ENCODE measurements at regions of chr7 and their contacts with region 1.

Region 1: GRCh38 chr7:33050535-33051318 is 11.8 kb downstream of the NT5C3A start:
- DNase-seq: no peak
- H3K4me3 Mint-ChIP-seq: no peak overlapping the region
- H3K27ac Mint-ChIP-seq: peak overlapping the region; percentile 12
- H3K4me1 Mint-ChIP-seq: peaks cover 40% of the 10 kb centered on the region
- H3K27me3 Mint-ChIP-seq: no peaks in the 10 kb centered on the region

Region 2: DNA sequence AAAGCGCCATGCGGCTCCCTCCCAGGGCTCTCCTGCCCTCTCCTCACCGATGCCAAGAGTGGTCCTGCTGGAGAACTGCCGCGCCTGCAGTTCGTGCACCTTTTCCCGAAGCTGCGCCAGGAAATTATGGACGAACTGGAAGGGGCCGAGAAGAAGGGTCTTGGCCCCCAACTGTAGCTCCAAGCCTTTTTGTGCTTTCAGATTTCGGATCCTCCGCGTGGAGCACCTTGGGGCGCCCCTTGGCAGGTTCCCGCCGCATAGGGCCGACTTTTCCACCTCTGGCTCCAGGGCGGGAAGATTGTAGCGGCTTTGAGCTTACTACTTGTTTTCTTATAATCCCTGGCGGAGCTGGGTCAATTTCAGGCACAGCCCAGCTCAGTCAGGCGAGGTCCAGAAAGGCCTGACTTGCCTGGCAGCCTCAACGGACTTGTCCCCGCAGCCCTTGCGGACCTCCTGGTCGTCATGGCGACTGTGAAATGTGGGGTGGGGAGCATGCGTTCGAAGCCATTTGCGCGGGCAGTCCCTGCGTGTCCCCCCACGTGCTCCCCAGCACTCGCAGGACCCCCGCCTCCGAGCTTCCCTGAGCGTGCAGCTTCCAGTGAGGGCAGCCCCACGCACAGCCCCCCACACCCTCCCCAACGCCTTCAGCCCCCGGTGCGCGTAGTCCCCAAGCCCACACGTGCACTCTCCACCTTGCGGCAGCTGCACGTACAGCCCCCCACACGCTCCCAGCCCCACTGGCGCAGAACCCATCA is 289.1 kb before region 1 on chr7:
- intact Hi-C with region 1: loop called (anchors 5 kb)
- DNase-seq: no peak
- H3K4me3 Mint-ChIP-seq: no peak overlapping the region
- H3K27ac Mint-ChIP-seq: no peak overlapping the region
- H3K4me1 Mint-ChIP-seq: peaks cover 9% of the 10 kb centered on the region
- H3K27me3 Mint-ChIP-seq: peaks cover 65% of the 10 kb centered on the region

Region 3: GRCh38 chr7:32803406-32804141 is 247.2 kb before region 1 on chr7:
- intact Hi-C with region 1: loop called (anchors 1 kb)
- DNase-seq: no peak
- H3K4me3 Mint-ChIP-seq: no peak overlapping the region
- H3K27ac Mint-ChIP-seq: no peak overlapping the region
- H3K4me1 Mint-ChIP-seq: no peaks in the 10 kb centered on the region
- H3K27me3 Mint-ChIP-seq: peaks cover 3% of the 10 kb centered on the region

Region 4: GRCh38 chr7:32846701-32847100 is 204.0 kb before region 1 on chr7:
- intact Hi-C with region 1: loop called (anchors 1 kb)
- DNase-seq: peak; percentile 74
- H3K4me3 Mint-ChIP-seq: peak overlapping the region; percentile 19
- H3K27ac Mint-ChIP-seq: no peak overlapping the region
- H3K4me1 Mint-ChIP-seq: peaks cover 11% of the 10 kb centered on the region
- H3K27me3 Mint-ChIP-seq: peaks cover 28% of the 10 kb centered on the region

Region 5: DNA sequence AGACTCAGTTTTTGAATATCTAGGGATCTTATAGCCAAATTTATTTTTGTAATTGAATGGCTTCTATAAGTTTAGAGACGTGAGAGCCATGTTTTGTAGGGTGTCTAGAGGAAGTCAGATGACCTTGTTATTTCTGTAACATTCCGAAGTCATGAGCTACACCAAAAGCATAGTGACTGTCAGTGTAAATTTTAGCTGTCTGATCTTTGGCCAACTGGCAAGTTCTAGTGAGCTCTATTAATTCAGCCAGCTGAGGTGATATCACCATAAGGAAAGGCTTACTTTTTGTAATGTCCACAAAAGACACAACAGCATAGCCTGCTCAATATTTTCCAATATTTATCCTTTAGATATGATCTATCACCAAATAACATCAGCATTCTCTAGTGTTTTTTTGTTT is 21.7 kb after region 1 on chr7:
- intact Hi-C with region 1: no loop called
- DNase-seq: no peak
- H3K4me3 Mint-ChIP-seq: no peak overlapping the region
- H3K27ac Mint-ChIP-seq: no peak overlapping the region
- H3K4me1 Mint-ChIP-seq: no peaks in the 10 kb centered on the region
- H3K27me3 Mint-ChIP-seq: peaks cover 23% of the 10 kb centered on the region

Region 6: DNA sequence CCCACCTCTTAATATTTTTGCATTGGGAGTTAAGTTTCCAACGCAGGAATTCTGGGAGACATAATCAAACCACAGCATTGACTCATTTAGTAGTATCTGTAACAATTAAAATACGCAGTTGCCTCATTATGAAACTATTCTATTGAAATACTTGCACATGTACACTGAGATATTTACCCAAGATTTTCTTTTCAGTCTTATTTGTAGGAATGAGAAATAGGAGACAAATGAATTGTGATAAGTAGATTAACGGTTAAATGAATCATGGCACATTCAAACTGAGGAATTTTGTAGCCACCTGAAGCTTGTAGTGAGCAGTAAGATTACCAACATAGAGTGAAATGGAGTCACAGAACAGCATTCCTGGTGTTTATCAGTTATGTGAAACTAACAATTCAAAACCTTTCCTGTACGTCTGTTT is 40.4 kb after region 1 on chr7:
- intact Hi-C with region 1: no loop called
- DNase-seq: no peak
- H3K4me3 Mint-ChIP-seq: no peak overlapping the region
- H3K27ac Mint-ChIP-seq: no peak overlapping the region
- H3K4me1 Mint-ChIP-seq: no peaks in the 10 kb centered on the region
- H3K27me3 Mint-ChIP-seq: no peaks in the 10 kb centered on the region